ENCODE measurements at regions of chrX and their contacts with region 1.

Region 1: GRCh38 chrX:104136241-104137019 is 20.4 kb downstream of the SLC25A53 start:
- DNase-seq: peak in 8 of 10 donors; percentile 47 to 79 (median 64)
- H3K4me3 ChIP-seq: peak overlapping the region in 58 of 59 donors; percentile 4 to 64 (median 50)
- H3K27ac ChIP-seq: peak overlapping the region in 33 of 59 donors; percentile 7 to 84 (median 49)
- H3K27me3 ChIP-seq: peaks cover 0 to 82% (median 23%) of the 10 kb centered on the region in 45 donors
- CTCF ChIP-seq: peak; percentile 57 to 95 (median 86)

Region 2: DNA sequence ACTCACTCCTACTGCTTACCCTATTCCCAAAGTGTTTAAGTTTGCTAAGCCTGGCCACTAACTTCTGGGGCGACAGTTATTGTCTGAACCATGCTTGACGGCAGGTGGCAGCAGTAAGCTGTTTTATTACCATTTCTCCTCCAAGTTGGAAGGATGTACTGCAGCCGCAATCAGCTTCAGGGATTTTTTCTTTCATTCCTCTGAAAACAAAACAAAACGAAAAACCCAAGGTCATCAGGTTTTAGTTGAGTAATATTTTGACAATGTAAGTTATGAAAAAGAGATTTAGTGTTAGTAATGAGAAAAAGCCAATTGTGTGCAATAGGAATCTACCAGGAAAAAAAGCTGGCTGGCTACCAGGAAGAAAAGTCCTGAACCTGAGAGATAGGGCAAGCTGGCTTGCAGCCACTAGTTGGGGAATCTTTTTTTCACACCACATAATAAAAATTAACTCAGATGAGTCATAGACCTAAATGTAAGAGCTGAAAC is 291.2 kb before region 1 on chrX:
- intact Hi-C with region 1: loop called in 1 of 2 experiments (anchors 10 kb)
- DNase-seq: peak in 8 of 10 donors; percentile 46 to 65 (median 52)
- H3K4me3 ChIP-seq: peak overlapping the region in 5 of 59 donors; percentile 9 to 27 (median 18)
- H3K27ac ChIP-seq: no peak overlapping the region
- H3K27me3 ChIP-seq: peaks cover 0 to 77% (median 21%) of the 10 kb centered on the region in 45 donors
- CTCF ChIP-seq: peak; percentile 19 to 82 (median 68)

Region 3: GRCh38 chrX:104098151-104098808 is 38.1 kb before region 1 on chrX:
- intact Hi-C with region 1: loop called in 1 of 2 experiments (anchors 1 kb)
- DNase-seq: peak in 3 of 10 donors; percentile 28 to 56 (median 34)
- H3K4me3 ChIP-seq: peak overlapping the region in 2 of 59 donors; percentile 4 to 17
- H3K27ac ChIP-seq: no peak overlapping the region
- H3K27me3 ChIP-seq: peaks cover 0 to 78% (median 42%) of the 10 kb centered on the region in 45 donors
- CTCF ChIP-seq: peak; percentile 31 to 82 (median 72)

Measured in dorsolateral prefrontal cortex (tissue), 120 donors.